ENCODE measurements at regions of chr1 and their contacts with region 1.

Region 1: DNA sequence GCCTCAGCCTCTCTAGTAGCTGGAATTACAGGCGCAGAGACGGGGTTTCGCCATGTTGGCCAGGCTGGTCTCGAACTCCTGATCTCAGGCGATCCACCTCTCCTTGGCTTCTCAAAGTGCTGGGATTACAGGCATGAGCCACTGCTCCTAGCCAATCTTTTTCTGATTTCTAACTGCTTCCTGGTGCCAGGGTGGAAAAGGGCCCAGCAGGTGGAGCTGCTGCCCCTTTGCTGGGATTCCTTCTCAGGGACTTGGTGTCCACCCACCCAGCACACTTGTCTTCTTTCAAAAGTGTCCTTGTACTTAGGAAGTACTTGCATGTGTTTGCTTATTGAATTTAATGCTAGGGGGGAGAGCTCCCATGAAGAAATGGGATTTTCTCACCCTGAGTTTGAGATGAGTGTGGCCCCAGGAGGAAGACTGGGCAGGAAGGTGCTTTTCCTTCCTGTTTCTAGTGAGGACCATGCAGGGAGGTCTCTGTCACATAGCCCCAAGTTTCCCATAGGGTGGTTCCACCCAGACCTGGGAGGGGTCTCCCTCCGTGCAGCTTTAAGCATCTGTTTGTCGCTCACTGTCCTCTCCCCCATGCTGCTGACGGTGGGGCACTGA is 14.2 kb downstream of the UTP11 start:
- DNase-seq: no peak
- ATAC-seq: no peak
- H3K4me3 Mint-ChIP-seq: no peak overlapping the region
- H3K27ac Mint-ChIP-seq: no peak overlapping the region
- H3K4me1 Mint-ChIP-seq: peaks cover 54% of the 10 kb centered on the region
- H3K27me3 Mint-ChIP-seq: no peaks in the 10 kb centered on the region

Region 2: GRCh38 chr1:38012363-38013226 is 14.1 kb before region 1 on chr1 and contains the start of gene UTP11:
- CTCF ChIA-PET with region 1: interaction called, 22 read pairs
- POLR2A ChIA-PET with region 1: interaction called, 4 read pairs
- DNase-seq: peak; percentile 96
- ATAC-seq: peak; percentile 92
- H3K4me3 Mint-ChIP-seq: peak within 1 kb of the TSS; percentile 98
- H3K27ac Mint-ChIP-seq: peak within 1 kb of the TSS; percentile 97
- H3K4me1 Mint-ChIP-seq: peaks cover 55% of the 10 kb centered on the region
- H3K27me3 Mint-ChIP-seq: no peaks in the 10 kb centered on the region
- total RNA-seq, gene UTP11: 39.0 to 39.5 TPM

Region 3: GRCh38 chr1:38071312-38072256 is 44.9 kb after region 1 on chr1:
- CTCF ChIA-PET with region 1: interaction called, 25 read pairs
- POLR2A ChIA-PET with region 1: no interaction called
- DNase-seq: no peak
- ATAC-seq: peak; percentile 55
- H3K4me3 Mint-ChIP-seq: no peak overlapping the region
- H3K27ac Mint-ChIP-seq: no peak overlapping the region
- H3K4me1 Mint-ChIP-seq: no peaks in the 10 kb centered on the region
- H3K27me3 Mint-ChIP-seq: peaks cover 17% of the 10 kb centered on the region

Region 4: GRCh38 chr1:38834937-38835827 is 808.5 kb after region 1 on chr1:
- CTCF ChIA-PET with region 1: interaction called, 10 read pairs
- POLR2A ChIA-PET with region 1: no interaction called
- DNase-seq: peak; percentile 73
- ATAC-seq: peak; percentile 92
- H3K4me3 Mint-ChIP-seq: no peak overlapping the region
- H3K27ac Mint-ChIP-seq: no peak overlapping the region
- H3K4me1 Mint-ChIP-seq: no peaks in the 10 kb centered on the region
- H3K27me3 Mint-ChIP-seq: peaks cover 19% of the 10 kb centered on the region